ENCODE measurements at regions of chrX and their contacts with region 1.

Region 1: DNA sequence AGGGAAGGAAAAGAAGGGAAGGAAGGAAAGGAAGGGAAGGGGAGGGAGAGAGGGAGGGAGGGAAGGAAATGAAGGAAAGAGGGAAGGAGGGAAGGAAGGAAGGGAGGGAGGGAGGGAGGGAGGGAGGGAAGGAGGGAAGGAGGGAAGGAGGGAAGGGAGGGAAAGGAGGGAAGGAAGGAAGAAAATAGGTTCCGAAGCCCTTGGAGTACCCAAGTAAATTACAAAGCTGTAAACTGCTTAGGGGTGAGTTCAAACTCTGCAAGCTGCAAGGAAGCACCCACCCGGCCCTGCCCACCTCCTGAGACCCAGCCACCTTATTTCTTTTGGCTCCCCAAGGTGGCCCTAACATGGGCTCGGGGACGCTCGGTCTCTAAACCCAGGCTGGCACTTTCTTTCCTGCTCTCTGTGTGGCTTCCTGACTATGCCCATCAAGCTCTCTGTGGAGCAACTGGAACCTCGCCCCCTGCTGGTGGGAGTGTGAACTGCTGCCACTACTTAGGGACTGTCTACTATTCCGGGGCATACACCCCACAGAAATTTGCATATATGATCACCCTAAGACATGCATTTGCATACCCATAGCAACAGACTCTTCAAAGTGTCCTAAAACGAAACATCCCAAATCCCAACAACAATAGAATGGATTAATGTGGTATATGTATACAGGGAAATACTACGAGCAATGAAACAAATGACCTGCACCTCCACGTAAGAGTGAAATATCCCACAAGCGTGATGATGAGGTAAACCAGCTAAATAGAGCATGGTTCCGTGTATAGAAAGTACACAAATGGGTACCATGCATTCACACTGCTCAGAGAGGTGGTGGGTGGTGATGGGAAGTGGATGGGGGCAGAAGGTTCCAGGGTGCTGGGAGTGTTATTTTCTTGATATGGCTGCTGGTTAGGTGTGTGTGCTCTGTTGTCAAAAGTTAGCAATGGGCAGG is 151.7 kb upstream of the TBL1X start:
- DNase-seq: peak; percentile 11 to 40
- ATAC-seq: no peak
- H3K4me3 ChIP-seq: no peak overlapping the region
- H3K27ac ChIP-seq: no peak overlapping the region
- H3K4me1 ChIP-seq: peaks cover 0 to 16% (median 0%) of the 10 kb centered on the region in 9 donors
- H3K27me3 ChIP-seq: no peaks in the 10 kb centered on the region
- CTCF ChIP-seq: peak; percentile 33 to 82 (median 58)

Region 2: GRCh38 chrX:8960817-8961489 is 352.2 kb before region 1 on chrX:
- intact Hi-C with region 1: loop called in 1 of 10 experiments (anchors 10 kb)
- DNase-seq: no peak
- ATAC-seq: no peak
- H3K4me3 ChIP-seq: no peak overlapping the region
- H3K27ac ChIP-seq: no peak overlapping the region
- H3K4me1 ChIP-seq: no peaks in the 10 kb centered on the region
- H3K27me3 ChIP-seq: peaks cover 0 to 79% (median 0%) of the 10 kb centered on the region in 7 donors
- CTCF ChIP-seq: no peak

Region 3: GRCh38 chrX:9566150-9566621 is 253.0 kb after region 1 on chrX:
- intact Hi-C with region 1: no loop called
- DNase-seq: peak; percentile 16 to 54
- ATAC-seq: peak; percentile 58 to 87 (median 75)
- H3K4me3 ChIP-seq: no peak overlapping the region
- H3K27ac ChIP-seq: peak overlapping the region in 1 of 10 donors; percentile 11
- H3K4me1 ChIP-seq: peaks cover 0 to 25% (median 15%) of the 10 kb centered on the region in 9 donors
- H3K27me3 ChIP-seq: no peaks in the 10 kb centered on the region
- CTCF ChIP-seq: peak in 1 of 9 donors; percentile 6